ENCODE measurements at regions of chr15 and their contacts with region 1.

Region 1: DNA sequence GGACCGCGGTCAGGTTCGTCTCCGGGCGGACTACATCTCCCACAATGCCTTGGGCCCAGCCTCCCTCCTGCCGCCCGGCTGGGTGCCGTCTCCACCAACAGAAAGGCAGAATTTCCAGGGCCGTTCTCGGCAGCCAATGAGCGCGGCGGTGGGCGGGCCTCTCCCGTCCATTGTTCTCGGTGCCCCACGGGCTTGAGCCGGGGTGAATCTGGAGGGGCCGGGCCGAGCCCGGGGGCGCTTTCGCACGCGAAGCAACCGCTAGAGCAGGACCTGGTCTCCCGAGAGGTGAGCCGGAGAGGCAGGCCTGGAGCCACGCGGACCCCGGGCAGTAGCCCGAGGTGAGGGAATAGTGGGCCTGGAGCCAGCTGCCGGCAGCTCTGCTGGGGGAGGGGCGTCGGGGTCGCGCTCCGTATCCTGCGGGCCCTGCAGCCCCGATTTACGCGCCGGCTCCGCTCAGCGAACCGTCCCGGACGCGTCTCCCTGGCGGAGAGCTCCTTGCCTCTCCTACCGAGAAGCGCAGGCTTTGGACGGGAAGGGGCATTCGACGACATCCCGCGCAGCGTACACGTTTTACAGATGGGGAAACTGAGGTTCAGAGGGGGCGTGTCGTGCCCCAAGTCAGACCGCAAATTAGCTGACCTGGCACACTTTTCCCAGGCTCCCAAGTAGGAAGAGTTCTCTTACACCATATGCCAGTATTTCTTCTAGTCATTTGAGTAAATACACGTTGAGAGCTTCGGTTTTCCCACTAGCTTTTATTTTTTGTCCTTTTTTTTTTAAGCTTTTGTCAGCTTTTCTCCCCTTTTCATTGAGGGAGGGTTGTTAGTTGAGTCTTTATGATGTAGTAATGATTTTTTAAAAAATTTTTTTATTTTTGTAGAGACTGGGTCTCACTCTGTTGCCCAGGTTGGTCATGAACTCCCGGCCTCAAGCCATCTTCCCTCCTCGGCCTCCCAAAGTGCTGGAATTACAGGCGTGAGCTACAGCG is at the start of gene ZSCAN2:
- DNase-seq: peak; percentile 97
- ATAC-seq: peak; percentile 97
- H3K4me3 Mint-ChIP-seq: peak within 1 kb of the TSS; percentile 95
- H3K27ac Mint-ChIP-seq: peak within 1 kb of the TSS; percentile 70
- H3K4me1 Mint-ChIP-seq: peaks cover 68% of the 10 kb centered on the region
- H3K27me3 Mint-ChIP-seq: no peaks in the 10 kb centered on the region
- total RNA-seq, gene ZSCAN2: 6.5 to 6.7 TPM

Region 2: DNA sequence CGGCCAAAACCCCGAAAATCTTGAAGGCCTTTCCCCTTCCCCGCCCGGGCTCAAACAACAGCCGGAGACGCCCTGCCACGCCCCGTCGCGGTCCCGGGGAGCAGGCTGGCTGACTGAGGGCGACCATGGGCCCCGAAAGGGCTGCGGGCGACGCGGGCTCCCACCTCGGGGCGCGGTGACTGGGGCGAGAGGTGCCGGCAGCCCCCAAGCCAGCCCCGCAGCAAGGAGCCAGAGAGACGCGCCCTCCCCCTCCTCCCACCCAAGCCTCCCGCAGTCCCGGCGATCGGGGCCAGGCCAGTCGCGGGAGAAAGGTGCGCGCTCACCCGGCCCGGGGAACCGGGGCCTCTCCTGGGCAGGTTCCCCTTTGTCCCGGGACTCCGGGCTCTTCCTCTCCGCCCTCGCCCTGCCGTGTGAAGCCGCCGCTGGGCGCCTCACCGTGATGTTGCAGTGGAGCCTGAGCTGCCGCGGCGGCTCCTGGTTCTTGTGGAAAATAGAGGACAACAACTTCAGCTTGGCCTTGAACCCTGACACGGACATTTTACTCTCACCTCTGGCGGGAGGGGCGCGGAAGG is 30.9 kb before region 1 on chr15:
- CTCF ChIA-PET with region 1: interaction called, 15 read pairs
- POLR2A ChIA-PET with region 1: interaction called, 3 read pairs
- DNase-seq: peak; percentile 68
- ATAC-seq: peak; percentile 77
- H3K4me3 Mint-ChIP-seq: peak overlapping the region; percentile 84
- H3K27ac Mint-ChIP-seq: peak overlapping the region; percentile 92
- H3K4me1 Mint-ChIP-seq: peaks cover 22% of the 10 kb centered on the region
- H3K27me3 Mint-ChIP-seq: no peaks in the 10 kb centered on the region

Region 3: DNA sequence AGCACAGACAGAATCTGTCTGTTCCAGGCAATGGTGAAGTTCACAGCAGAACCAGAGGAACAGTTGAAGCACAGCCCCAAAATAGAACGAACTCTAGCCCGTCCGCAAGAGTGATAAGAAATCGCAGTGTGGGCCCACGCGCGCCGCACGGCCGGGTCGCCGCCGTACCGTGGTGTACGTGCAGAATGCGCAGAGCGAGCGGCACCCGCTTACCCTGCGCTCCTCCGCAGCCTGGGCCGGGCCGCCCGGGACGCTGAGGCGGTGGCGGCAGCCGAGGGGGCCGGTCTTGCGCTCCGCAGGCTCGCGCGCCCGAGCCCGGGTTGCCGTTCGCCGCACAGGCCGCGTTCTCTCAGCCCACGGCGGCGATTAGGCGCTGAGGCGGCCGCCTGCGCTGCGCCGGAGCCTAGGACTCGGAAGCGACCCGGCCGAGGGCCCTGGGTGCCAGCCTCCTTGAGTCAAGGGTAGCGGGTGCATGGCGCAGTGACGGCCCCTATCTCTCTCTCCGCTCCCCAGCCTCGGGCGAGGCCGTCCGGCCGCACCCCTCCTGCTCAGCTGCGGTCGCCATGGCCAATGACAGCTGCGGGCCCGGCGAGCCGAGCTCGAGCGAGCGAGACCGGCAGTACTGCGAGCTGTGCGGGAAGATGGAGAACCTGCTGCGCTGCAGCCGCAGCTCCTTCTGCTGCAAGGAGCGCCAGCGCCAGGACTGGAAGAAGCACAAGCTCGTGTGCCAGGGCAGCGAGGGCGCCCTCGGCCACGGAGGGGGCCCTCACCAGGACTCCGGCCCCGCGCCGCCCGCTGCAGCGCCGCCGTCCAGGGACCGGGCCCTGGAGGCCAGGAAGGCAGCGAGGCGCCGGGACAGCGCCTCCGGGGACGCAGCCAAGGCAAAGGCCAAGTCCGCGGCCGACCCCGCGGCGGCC is 32.4 kb after region 1 on chr15:
- CTCF ChIA-PET with region 1: interaction called, 79 read pairs
- POLR2A ChIA-PET with region 1: interaction called, 23 read pairs
- DNase-seq: peak; percentile 73
- ATAC-seq: peak; percentile 58
- H3K4me3 Mint-ChIP-seq: peak overlapping the region; percentile 88
- H3K27ac Mint-ChIP-seq: peak overlapping the region; percentile 94
- H3K4me1 Mint-ChIP-seq: peaks cover 55% of the 10 kb centered on the region
- H3K27me3 Mint-ChIP-seq: no peaks in the 10 kb centered on the region

Region 4: GRCh38 chr15:84716036-84716799 is 115.1 kb after region 1 on chr15 and contains the start of gene SEC11A:
- CTCF ChIA-PET with region 1: interaction called, 11 read pairs
- POLR2A ChIA-PET with region 1: no interaction called
- DNase-seq: peak; percentile 93
- ATAC-seq: peak; percentile 98
- H3K4me3 Mint-ChIP-seq: peak within 1 kb of the TSS; percentile 95
- H3K27ac Mint-ChIP-seq: peak within 1 kb of the TSS; percentile 98
- H3K4me1 Mint-ChIP-seq: peaks cover 55% of the 10 kb centered on the region
- H3K27me3 Mint-ChIP-seq: no peaks in the 10 kb centered on the region
- total RNA-seq, gene SEC11A: 117 to 119 TPM

Region 5: DNA sequence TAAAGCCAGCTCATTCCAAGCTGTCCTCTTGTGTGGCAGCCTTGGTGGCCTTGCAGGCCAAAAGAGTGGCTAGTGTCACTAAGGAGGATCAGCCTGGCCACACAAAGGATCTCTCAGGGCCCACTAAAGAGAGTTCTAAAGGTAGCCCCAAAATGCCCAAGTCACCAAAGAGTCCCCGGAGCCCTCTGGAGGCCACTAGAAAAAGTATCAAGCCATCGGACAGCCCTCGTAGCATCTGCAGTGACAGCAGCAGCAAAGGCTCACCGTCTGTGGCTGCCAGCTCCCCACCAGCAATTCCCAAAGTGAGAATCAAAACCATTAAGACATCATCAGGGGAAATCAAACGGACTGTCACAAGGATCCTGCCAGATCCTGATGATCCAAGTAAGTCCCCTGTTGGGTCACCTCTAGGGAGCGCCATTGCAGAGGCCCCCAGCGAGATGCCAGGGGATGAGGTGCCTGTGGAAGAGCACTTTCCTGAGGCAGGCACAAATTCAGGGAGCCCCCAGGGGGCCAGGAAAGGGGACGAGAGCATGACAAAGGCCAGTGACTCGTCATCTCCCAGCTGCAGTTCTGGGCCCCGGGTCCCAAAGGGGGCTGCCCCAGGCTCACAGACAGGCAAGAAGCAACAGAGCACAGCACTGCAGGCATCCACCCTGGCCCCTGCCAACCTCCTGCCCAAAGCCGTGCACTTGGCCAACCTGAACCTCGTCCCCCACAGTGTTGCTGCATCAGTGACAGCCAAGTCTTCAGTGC is 182.5 kb after region 1 on chr15:
- CTCF ChIA-PET with region 1: no interaction called
- POLR2A ChIA-PET with region 1: no interaction called
- DNase-seq: no peak
- ATAC-seq: no peak
- H3K4me3 Mint-ChIP-seq: no peak overlapping the region
- H3K27ac Mint-ChIP-seq: no peak overlapping the region
- H3K4me1 Mint-ChIP-seq: peaks cover 35% of the 10 kb centered on the region
- H3K27me3 Mint-ChIP-seq: no peaks in the 10 kb centered on the region

Region 6: DNA sequence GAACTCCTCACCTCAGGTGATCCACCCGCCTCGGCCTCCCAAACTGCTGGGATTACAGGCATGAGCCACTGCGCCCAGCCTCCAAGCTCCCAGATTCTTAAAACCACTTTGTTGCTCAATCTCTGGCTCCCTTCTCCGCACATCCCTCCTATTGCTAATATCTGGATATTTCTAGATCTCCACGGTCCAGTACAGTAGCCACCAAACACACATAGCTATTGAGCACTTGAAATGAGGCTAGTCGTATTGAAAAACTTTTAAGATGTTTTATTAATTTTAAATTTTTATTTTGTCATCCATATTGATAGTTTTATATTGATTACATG is 327.7 kb after region 1 on chr15:
- CTCF ChIA-PET with region 1: interaction called, 11 read pairs
- POLR2A ChIA-PET with region 1: no interaction called
- DNase-seq: no peak
- ATAC-seq: no peak
- H3K4me3 Mint-ChIP-seq: no peak overlapping the region
- H3K27ac Mint-ChIP-seq: no peak overlapping the region
- H3K4me1 Mint-ChIP-seq: peaks cover 5% of the 10 kb centered on the region
- H3K27me3 Mint-ChIP-seq: no peaks in the 10 kb centered on the region